ENCODE measurements at regions of chr4 and their contacts with region 1.

Region 1: DNA sequence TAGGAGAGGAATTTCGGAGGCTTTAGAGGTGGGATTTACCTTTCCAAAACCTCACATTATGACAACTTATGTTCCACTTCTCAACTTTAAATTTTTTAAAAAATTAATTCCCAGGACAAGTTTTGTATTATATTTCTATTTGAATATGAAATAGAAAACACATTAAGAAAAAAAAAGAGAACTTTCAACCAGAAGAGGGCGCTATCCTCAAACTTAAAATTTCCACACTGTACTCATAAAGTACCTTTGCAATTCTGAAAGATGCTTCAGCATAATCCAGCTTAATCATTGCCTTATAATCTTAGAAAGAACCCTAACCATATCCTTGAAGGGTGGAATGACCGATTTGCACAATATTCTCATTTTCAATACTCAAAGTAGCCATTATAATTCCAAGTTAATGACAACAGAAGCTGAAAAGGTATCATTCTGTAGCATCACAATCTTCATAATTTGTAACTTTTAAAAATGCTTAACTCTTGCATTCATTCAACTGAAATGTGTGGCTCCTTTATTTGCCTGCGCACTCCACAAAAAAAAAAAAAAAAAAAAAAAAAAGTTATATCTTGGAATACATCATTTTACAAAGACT is 158.0 kb downstream of the KCNIP4 start:
- DNase-seq: peak in 1 of 35 experiments; percentile 24
- ATAC-seq: no peak
- H3K4me3 ChIP-seq: no peak overlapping the region
- H3K4me3 Mint-ChIP-seq: no peak overlapping the region
- H3K27ac ChIP-seq: no peak overlapping the region
- H3K27ac Mint-ChIP-seq: no peak overlapping the region
- H3K4me1 ChIP-seq: no peaks in the 10 kb centered on the region
- H3K4me1 Mint-ChIP-seq: no peaks in the 10 kb centered on the region
- H3K27me3 ChIP-seq: no peaks in the 10 kb centered on the region
- H3K27me3 Mint-ChIP-seq: no peaks in the 10 kb centered on the region

Region 2: GRCh38 chr4:22389240-22389870 is 598.8 kb after region 1 on chr4:
- CTCF ChIA-PET with region 1: interaction called, 8 to 25 read pairs
- POLR2A ChIA-PET with region 1: no interaction called
- DNase-seq: peak in 24 of 35 experiments; percentile 4 to 53 (median 13)
- ATAC-seq: peak in 2 of 4 experiments; percentile 53 to 64
- H3K4me3 ChIP-seq: no peak overlapping the region
- H3K4me3 Mint-ChIP-seq: no peak overlapping the region
- H3K27ac ChIP-seq: no peak overlapping the region
- H3K27ac Mint-ChIP-seq: no peak overlapping the region
- H3K4me1 ChIP-seq: no peaks in the 10 kb centered on the region
- H3K4me1 Mint-ChIP-seq: no peaks in the 10 kb centered on the region
- H3K27me3 ChIP-seq: no peaks in the 10 kb centered on the region
- H3K27me3 Mint-ChIP-seq: no peaks in the 10 kb centered on the region

Region 3: DNA sequence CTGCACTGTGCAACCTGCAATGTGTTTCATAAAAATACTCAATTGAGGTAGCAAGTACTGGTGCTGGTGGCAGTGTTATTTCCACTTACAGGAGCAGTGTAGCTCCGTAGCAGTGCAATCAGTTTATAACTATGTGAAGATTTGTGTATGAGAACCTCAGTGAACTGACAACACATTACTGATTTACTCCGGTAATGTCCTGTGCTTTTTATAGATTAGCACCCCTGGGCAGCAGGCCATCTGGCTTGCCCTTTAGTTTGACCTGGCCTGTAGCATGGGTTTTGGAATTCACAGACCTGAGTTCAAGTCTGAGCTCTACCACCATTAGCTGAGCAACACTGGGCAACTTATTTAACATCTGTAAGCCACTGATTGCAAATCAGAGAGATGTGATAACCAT is 823.6 kb after region 1 on chr4:
- CTCF ChIA-PET with region 1: no interaction called
- POLR2A ChIA-PET with region 1: no interaction called
- DNase-seq: no peak
- ATAC-seq: no peak
- H3K4me3 ChIP-seq: no peak overlapping the region
- H3K4me3 Mint-ChIP-seq: no peak overlapping the region
- H3K27ac ChIP-seq: no peak overlapping the region
- H3K27ac Mint-ChIP-seq: no peak overlapping the region
- H3K4me1 ChIP-seq: no peaks in the 10 kb centered on the region
- H3K4me1 Mint-ChIP-seq: peaks cover 6 to 20% (median 11%) of the 10 kb centered on the region in 3 donors
- H3K27me3 ChIP-seq: no peaks in the 10 kb centered on the region
- H3K27me3 Mint-ChIP-seq: no peaks in the 10 kb centered on the region

Region 4: DNA sequence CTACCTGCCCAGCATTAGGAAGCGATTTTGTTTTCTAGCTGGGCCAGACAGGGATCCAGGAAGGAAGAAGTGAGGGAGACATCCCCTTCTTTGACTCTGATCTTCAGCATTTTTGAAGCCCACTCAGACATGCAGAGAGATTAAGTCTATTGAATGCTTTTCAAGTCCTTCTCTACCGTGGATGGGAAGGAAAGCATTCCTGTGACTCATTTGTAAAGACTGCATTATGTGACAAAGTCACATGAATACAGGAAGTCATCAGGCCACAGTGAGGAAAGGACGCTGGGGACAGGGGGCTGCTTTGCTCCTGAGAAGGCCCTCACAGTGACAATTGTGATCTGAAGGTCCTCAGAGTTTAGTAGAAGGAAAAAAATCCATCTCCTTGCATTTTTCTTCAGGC is 834.8 kb after region 1 on chr4:
- CTCF ChIA-PET with region 1: no interaction called
- POLR2A ChIA-PET with region 1: no interaction called
- DNase-seq: no peak
- ATAC-seq: no peak
- H3K4me3 ChIP-seq: no peak overlapping the region
- H3K4me3 Mint-ChIP-seq: no peak overlapping the region
- H3K27ac ChIP-seq: no peak overlapping the region
- H3K27ac Mint-ChIP-seq: no peak overlapping the region
- H3K4me1 ChIP-seq: no peaks in the 10 kb centered on the region
- H3K4me1 Mint-ChIP-seq: no peaks in the 10 kb centered on the region
- H3K27me3 ChIP-seq: no peaks in the 10 kb centered on the region
- H3K27me3 Mint-ChIP-seq: no peaks in the 10 kb centered on the region

Region 5: DNA sequence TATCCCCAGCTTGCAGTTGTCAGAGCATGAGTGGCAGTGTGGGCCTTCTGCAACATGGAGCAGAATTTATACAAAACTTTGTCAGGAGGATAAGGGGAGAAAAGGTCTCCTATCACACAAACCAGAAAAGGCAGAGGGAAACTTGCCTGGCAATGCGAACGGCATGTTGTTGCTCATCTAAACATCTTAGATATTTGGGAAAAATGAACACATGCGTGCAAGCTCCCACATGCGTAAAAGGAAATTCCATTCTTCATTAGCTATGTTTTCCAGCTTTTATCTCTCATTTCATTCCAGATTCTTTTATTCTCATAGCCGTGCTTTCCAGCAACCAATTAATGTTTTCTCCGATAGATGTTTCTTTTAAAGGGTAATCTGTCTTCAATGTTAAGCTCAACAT is 870.9 kb after region 1 on chr4:
- CTCF ChIA-PET with region 1: interaction called in 1 of 2 experiments, 10 read pairs
- POLR2A ChIA-PET with region 1: no interaction called
- DNase-seq: no peak
- ATAC-seq: no peak
- H3K4me3 ChIP-seq: no peak overlapping the region
- H3K4me3 Mint-ChIP-seq: no peak overlapping the region
- H3K27ac ChIP-seq: no peak overlapping the region
- H3K27ac Mint-ChIP-seq: no peak overlapping the region
- H3K4me1 ChIP-seq: no peaks in the 10 kb centered on the region
- H3K4me1 Mint-ChIP-seq: no peaks in the 10 kb centered on the region
- H3K27me3 ChIP-seq: no peaks in the 10 kb centered on the region
- H3K27me3 Mint-ChIP-seq: no peaks in the 10 kb centered on the region